ENCODE measurements at regions of chr21 and their contacts with region 1.

Region 1: GRCh38 chr21:42107881-42108553 is 36.9 kb downstream of the UMODL1 start:
- DNase-seq: peak; percentile 76
- H3K4me3 Mint-ChIP-seq: no peak overlapping the region
- H3K27ac Mint-ChIP-seq: no peak overlapping the region
- H3K4me1 Mint-ChIP-seq: peaks cover 10% of the 10 kb centered on the region
- H3K27me3 Mint-ChIP-seq: peaks cover 1% of the 10 kb centered on the region

Region 2: DNA sequence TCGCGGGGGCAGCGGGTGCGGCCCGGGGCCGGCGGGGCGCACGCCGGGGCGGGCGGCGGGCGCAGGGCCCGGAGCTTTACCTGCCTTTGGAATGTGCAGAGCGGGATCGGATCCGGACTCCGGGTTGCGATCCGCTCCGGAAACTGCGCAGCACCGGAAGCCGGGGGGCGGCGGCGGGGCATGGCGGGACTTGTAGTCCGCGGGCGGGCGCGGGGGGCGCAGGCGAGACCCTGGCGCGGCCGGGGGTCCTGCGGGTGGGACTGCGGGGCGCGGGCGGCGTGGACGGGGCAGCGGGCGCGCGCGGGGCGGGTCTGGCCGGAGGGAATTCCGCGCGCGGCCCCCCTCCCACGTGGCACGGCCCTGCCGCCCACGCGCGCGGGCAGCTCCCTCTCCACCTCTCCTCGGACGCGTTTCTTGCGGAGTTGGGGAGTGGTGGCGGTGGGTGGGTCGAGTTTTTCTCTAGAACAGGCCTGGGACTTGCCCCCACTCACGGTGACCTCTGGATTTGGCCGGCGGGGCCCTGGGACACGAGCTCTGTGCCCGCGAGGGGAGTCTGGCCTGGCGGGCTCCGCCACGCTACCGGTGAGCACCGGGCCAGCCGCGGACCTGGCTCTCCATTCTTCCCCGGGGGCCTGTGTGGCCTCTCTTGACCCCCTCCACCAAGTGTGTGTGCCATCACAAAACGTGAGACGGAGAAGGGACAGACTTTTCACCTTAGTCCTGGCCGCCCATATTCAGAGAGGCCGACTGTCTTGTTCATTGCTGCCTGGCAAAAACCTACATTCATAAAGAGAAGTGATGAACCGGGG is 228.6 kb before region 1 on chr21 and contains the start of gene PRDM15:
- CTCF ChIA-PET with region 1: interaction called, 6 read pairs
- POLR2A ChIA-PET with region 1: no interaction called
- intact Hi-C with region 1: loop called (anchors 5 kb)
- DNase-seq: peak; percentile 88
- H3K4me3 Mint-ChIP-seq: peak within 1 kb of the TSS; percentile 85
- H3K27ac Mint-ChIP-seq: peak within 1 kb of the TSS; percentile 94
- H3K4me1 Mint-ChIP-seq: peaks cover 21% of the 10 kb centered on the region
- H3K27me3 Mint-ChIP-seq: no peaks in the 10 kb centered on the region
- total RNA-seq, gene PRDM15: 8.5 to 9.9 TPM

Region 3: DNA sequence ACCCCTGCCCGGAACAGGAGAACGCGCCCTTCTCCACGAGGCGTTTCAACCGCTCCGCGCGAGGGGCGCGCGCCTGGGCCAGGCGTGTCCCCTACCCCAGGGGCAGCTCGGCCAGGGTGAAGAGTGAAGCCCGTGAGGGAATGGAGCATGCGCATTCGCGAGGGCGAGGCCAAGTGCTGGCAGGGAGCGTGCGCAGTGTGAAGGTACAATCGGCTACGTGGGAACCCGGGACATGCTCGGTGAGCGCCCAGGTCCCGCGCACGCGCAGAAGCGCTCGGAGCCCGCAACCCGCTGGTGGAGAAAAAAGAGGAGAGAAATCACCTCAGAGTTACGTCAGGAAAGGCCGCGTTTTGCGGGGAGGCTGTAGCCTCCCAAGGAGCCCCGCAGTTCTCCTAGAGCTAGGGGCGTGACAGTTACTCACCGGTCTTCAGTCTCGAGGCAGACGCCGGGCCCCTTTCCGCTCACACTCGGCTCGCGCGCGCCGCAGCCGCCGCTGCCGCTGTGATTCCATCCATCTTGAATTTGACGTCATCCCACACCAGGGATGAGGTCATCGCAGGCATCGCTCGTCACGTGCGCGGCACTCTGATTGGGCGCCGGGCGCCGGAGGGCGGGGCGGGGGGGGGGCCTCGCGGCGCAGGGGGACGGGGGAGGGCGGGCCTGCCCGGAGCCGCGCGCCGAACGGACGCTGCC is 98.0 kb before region 1 on chr21 and contains the start of gene ZBTB21:
- CTCF ChIA-PET with region 1: interaction called, 11 read pairs
- POLR2A ChIA-PET with region 1: interaction called, 3 read pairs
- intact Hi-C with region 1: no loop called
- DNase-seq: peak; percentile 99
- H3K4me3 Mint-ChIP-seq: peak within 1 kb of the TSS; percentile 88
- H3K27ac Mint-ChIP-seq: peak within 1 kb of the TSS; percentile 99
- H3K4me1 Mint-ChIP-seq: peaks cover 27% of the 10 kb centered on the region
- H3K27me3 Mint-ChIP-seq: no peaks in the 10 kb centered on the region
- total RNA-seq, gene ZBTB21: 23.6 to 24.1 TPM

Region 4: DNA sequence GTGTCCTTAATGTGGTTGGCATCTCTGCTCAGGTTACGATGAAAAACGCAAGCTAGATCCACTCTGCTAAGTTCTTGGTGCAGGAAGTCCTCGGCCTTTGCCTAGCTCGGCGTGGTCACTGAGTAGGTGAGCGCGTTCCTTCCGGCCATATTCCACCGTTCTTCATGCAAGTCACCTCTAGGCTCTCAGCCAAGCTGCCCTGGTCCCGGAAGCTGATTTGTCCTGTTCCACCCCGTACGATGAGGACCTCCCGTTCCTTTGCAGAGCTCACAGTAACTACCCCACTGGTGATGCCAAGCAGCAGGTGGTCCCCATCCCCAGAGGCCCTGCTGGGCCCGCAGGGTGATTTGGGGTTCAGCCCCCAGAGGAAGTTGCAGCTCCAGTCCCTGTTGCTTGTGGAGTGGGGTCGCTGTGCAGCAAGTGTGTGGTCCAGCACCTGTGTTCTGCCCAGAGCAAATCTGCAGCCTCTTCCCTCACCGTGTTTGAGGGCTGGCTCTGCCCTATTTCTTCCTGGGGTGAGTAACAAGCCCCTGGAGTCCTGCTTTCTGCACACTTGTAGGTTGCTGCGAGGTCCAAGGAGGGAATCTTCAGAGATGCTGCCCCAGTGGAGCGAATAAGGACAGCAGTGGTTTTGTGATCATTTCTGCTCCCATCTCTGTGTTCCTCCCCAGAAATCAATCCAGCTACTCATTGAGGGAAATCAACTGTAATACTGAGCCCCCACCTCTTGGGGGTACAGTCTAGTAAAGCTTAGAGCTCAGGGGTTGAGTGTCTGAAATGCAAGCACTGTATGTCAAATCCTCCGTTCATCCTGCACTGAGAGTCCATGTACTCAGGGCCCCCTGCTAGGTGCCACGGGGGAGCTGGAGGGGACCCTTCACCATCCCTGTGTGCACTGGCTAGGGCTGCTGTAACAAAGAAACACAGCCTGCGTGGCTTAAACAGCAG is 34.6 kb before region 1 on chr21:
- CTCF ChIA-PET with region 1: interaction called, 10 read pairs
- POLR2A ChIA-PET with region 1: no interaction called
- intact Hi-C with region 1: no loop called
- DNase-seq: no peak
- H3K4me3 Mint-ChIP-seq: no peak overlapping the region
- H3K27ac Mint-ChIP-seq: no peak overlapping the region
- H3K4me1 Mint-ChIP-seq: no peaks in the 10 kb centered on the region
- H3K27me3 Mint-ChIP-seq: no peaks in the 10 kb centered on the region

Region 5: DNA sequence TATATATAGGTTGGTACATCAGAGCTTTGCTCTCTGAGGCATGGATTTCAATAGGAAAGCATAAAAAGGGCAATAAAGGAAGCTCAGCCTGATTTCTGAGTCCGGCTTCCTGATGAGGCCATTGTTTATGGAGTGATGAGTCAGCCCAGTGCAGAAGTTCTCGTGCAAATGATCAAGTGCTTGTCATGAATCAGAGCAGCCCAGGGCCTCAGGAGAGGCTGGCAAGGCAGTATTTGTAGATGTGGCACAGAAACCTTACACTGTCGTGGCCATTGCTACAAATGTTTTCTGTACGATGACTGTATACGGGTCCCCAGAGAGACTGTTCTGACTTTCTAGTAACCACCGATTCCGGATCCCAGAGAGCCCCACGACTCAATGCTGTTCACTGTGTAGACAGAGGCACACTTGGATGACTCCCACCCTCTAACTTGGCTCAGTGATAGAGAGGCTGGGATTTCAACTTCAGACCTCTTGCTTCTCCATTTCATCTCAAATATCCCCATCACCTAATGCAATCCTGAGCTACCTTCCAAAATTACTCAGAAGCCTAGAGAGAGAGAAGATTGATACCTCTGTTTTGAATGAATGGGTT is 10.1 kb before region 1 on chr21:
- CTCF ChIA-PET with region 1: interaction called, 15 read pairs
- POLR2A ChIA-PET with region 1: no interaction called
- intact Hi-C with region 1: no loop called
- DNase-seq: peak; percentile 32
- H3K4me3 Mint-ChIP-seq: no peak overlapping the region
- H3K27ac Mint-ChIP-seq: no peak overlapping the region
- H3K4me1 Mint-ChIP-seq: no peaks in the 10 kb centered on the region
- H3K27me3 Mint-ChIP-seq: peaks cover 5% of the 10 kb centered on the region